OCI-LY7 (cell line): ENCODE measurements at regions of chr3 and their contacts with region 1.

Region 1: GRCh38 chr3:15205934-15206661 is at the start of gene CAPN7:
- DNase-seq: peak; percentile 95
- H3K4me3 ChIP-seq: peak within 1 kb of the TSS; percentile 74
- H3K27ac ChIP-seq: peak within 1 kb of the TSS; percentile 74
- H3K4me1 ChIP-seq: peaks cover 30% of the 10 kb centered on the region
- CTCF ChIP-seq: no peak; the same call in 1 of the 2 replicates
- total RNA-seq, gene CAPN7: 20.5 and 33.4 TPM in 2 replicates

Region 2: DNA sequence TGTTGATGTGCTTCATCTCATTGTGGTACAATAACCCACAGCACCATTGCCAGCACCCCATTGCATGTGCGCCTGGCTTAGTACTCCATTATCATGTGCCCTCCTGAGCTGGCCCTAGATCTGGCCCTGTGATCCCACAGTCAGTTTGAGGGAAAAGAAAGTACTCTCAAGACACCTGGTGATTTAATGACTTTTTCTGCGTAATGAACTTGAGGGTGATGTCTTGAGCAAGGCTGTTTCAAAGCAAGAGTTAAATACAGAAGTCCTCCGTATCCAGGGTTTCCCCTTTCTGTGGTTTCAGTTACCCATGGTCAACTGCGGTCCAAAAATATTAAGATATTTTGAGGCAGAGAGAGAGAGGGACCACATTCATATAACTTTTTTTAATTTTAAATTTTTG is 514.9 kb before region 1 on chr3:
- CTCF ChIA-PET with region 1: no interaction called
- POLR2A ChIA-PET with region 1: no interaction called
- intact Hi-C with region 1: no loop called
- DNase-seq: peak; percentile 31
- H3K4me3 ChIP-seq: peak overlapping the region; percentile 33
- H3K27ac ChIP-seq: peak overlapping the region; percentile 91
- H3K4me1 ChIP-seq: peaks cover 60% of the 10 kb centered on the region
- CTCF ChIP-seq: no peak

Region 3: DNA sequence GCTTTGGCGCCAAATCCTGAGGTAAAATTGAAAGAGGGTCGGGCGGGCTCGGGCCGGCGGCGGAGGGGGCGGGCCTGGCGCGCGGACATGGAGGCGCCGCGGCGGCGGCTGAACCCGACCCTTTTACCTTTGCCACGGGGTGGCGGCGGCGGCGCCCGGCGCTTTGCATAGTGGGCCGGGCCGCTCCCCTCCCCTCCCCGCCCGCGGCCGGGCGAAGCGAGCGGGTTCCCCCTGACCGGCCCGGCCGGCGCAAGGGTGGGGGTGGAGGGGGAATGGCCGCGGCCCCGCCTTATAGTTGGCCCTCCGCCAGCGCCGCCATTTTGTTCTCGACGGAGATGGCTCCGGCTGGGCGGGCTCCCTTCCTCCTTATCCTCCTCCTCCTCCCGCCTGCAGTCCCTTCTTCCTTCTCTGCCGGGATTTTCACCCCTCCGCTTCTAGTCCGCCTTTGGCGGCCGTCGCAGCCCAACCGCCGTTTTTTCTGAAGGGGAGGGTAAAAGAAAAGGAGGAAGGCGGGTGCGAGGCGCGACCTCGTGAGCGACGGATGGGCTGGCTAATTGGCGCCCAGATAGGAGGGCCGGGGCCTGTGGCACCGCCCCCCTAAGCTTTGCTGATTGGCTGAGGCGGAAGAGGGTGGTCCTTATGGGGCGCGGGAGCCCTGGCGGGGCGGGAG is 258.1 kb before region 1 on chr3:
- CTCF ChIA-PET with region 1: no interaction called
- POLR2A ChIA-PET with region 1: interaction called, 3 read pairs
- intact Hi-C with region 1: loop called (anchors 2 kb)
- DNase-seq: peak; percentile 97
- H3K4me3 ChIP-seq: peak overlapping the region; percentile 81
- H3K27ac ChIP-seq: peak overlapping the region; percentile 83
- H3K4me1 ChIP-seq: peaks cover 30% of the 10 kb centered on the region
- CTCF ChIP-seq: no peak

Region 4: DNA sequence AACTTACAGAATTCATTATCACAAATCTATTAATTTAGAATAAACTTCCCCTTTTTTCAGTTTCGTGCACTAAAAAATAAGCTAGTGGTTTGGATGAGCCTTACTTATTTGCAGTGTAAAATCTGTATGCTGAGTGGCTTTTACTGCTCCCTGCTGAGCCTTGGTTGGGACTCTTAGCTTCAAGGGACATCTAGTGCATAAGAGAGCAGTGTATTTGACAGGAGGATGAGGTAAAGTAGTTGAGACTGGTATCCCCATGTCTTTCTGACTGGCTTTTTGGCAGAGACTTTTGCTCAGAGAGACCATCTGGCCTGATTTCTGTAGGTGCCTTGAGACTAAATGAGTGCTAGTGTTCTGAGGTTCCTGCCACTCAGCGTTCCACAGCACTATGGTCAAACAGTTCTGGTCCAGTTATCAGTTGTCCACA is 11.8 kb after region 1 on chr3:
- CTCF ChIA-PET with region 1: interaction called, 11 read pairs
- POLR2A ChIA-PET with region 1: interaction called, 41 read pairs
- intact Hi-C with region 1: no loop called
- DNase-seq: peak; percentile 51
- H3K4me3 ChIP-seq: no peak overlapping the region
- H3K27ac ChIP-seq: peak overlapping the region; percentile 60
- H3K4me1 ChIP-seq: peaks cover 43% of the 10 kb centered on the region
- CTCF ChIP-seq: no peak

Region 5: GRCh38 chr3:15332405-15333098 is 126.5 kb after region 1 on chr3 and contains the start of gene SH3BP5:
- CTCF ChIA-PET with region 1: no interaction called
- POLR2A ChIA-PET with region 1: interaction called, 3 read pairs
- intact Hi-C with region 1: loop called (anchors 1 kb)
- DNase-seq: peak; percentile 86
- H3K4me3 ChIP-seq: peak within 1 kb of the TSS; percentile 88
- H3K27ac ChIP-seq: peak within 1 kb of the TSS; percentile 24
- H3K4me1 ChIP-seq: peaks cover 50% of the 10 kb centered on the region
- CTCF ChIP-seq: peak; percentile 73
- total RNA-seq, gene SH3BP5: 15.1 and 15.7 TPM in 2 replicates

Region 6: DNA sequence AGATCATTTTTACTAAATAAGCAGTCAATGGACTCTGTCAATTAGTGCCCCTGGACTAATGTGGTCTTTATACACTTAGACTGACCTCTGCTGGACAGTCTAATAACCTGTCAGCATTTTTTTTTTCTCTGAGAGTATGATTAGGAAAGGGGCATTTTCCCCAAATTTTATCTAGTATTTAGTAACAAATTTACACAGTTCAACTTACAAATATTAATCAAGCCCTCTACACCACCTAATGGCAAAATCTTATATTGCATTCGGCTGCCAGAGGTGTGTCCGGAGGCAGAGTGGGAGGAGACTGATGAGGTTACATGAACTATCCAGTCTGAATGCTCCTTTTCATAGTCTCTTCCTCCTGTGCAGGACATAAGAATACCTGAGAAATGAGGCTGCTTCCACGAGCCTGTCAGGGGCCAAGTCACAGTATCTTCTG is 351.4 kb after region 1 on chr3:
- CTCF ChIA-PET with region 1: no interaction called
- POLR2A ChIA-PET with region 1: interaction called, 4 read pairs
- intact Hi-C with region 1: loop called (anchors 2 kb)
- DNase-seq: peak; percentile 70
- H3K4me3 ChIP-seq: no peak overlapping the region
- H3K27ac ChIP-seq: no peak overlapping the region
- H3K4me1 ChIP-seq: peaks cover 17% of the 10 kb centered on the region
- CTCF ChIP-seq: peak; percentile 87

Region 7: GRCh38 chr3:16247276-16248061 is 1041.4 kb after region 1 on chr3:
- CTCF ChIA-PET with region 1: no interaction called
- POLR2A ChIA-PET with region 1: no interaction called
- intact Hi-C with region 1: loop called (anchors 10 kb)
- DNase-seq: peak; percentile 88
- H3K4me3 ChIP-seq: no peak overlapping the region
- H3K27ac ChIP-seq: no peak overlapping the region
- H3K4me1 ChIP-seq: peaks cover 6% of the 10 kb centered on the region
- CTCF ChIP-seq: peak; percentile 97